ENCODE measurements at regions of chr12 and their contacts with region 1.

Region 1: GRCh38 chr12:30847259-30847658 is 79.3 kb upstream of the TSPAN11 start:
- DNase-seq: no peak
- H3K4me3 ChIP-seq: no peak overlapping the region
- H3K27ac ChIP-seq: no peak overlapping the region
- H3K4me1 ChIP-seq: no peaks in the 10 kb centered on the region
- H3K27me3 ChIP-seq: no peaks in the 10 kb centered on the region
- CTCF ChIP-seq: peak in 5 of 6 experiments; percentile 38 to 61 (median 47)
- POLR2A ChIP-seq: no peak

Region 2: DNA sequence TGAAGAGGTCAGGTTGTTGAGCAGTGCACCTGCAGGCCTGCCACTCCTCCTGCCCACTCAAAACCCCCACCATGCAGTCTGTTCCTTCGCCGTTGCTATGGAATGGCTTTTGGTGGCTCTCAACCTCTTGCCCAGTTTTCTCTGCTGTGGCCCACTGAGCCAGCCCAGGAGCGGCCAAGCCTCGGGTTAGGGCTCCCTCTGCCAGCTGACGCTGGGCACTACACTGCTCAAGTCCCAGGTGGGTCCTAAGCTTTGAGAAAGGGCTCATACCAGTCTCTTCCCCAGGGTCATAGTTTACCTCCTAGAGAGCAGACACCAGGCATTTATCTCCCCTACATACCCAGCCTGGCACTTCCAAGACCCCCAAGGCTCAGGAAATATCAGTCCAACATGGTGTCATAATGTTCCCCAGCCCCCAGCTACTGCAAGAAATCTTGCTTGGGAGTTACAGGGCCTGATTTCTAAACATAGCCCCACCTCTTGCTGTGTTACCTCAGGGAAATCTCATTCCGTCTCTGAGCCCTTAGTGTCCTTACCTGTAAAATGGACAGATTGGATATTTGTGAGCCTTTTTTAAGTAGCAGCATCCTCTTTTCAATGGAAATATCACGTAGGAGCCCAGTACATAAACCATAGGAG is 138.7 kb after region 1 on chr12:
- intact Hi-C with region 1: loop called (anchors 10 kb)
- DNase-seq: peak; percentile 50 to 54
- H3K4me3 ChIP-seq: no peak overlapping the region
- H3K27ac ChIP-seq: no peak overlapping the region
- H3K4me1 ChIP-seq: no peaks in the 10 kb centered on the region
- H3K27me3 ChIP-seq: no peaks in the 10 kb centered on the region
- CTCF ChIP-seq: peak in 5 of 6 experiments; percentile 17 to 64 (median 24)
- POLR2A ChIP-seq: no peak

Region 3: DNA sequence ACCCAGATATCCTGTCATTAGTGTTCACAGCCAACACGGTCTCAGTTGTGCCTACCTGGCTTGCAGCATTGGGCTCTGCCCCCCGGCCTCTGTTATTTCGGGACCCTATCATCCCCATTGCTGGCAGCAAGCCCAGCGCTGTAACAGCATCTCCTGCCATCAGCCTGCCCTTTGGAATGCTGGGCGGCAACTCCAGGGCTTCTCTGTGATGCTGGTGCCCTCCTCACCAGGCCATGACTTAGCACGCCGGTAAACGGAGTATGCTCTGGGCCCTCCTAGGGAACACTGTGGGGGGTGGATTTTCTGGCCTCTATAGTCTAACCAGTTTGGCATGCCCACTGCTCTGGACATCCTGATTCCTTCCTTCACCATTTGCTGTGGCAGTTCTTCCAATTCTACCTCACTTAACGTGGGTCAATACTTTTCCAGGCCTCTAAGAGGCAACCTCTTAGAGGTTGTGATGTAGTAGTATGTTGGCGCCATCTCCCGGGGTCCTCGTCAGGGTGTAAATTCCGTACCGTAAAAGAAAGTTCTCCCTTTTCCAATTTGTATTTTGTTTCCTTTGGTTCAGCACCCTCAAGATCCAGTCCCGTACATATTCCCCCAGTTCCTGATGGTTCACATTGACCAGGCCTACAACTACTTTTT is 398.7 kb after region 1 on chr12:
- intact Hi-C with region 1: loop called (anchors 10 kb)
- DNase-seq: no peak
- H3K4me3 ChIP-seq: no peak overlapping the region
- H3K27ac ChIP-seq: no peak overlapping the region
- H3K4me1 ChIP-seq: no peaks in the 10 kb centered on the region
- H3K27me3 ChIP-seq: no peaks in the 10 kb centered on the region
- CTCF ChIP-seq: peak in 2 of 6 experiments; percentile 11 to 13
- POLR2A ChIP-seq: no peak

Region 4: GRCh38 chr12:31267966-31268365 is 420.7 kb after region 1 on chr12:
- intact Hi-C with region 1: loop called (anchors 5 kb)
- DNase-seq: no peak
- H3K4me3 ChIP-seq: no peak overlapping the region
- H3K27ac ChIP-seq: no peak overlapping the region
- H3K4me1 ChIP-seq: no peaks in the 10 kb centered on the region
- H3K27me3 ChIP-seq: no peaks in the 10 kb centered on the region
- CTCF ChIP-seq: no peak
- POLR2A ChIP-seq: no peak

Measured in thyroid gland (tissue), 4 donors.